Activated naive CD4-positive, alpha-beta T cell treated with anti-CD3 and anti-CD28 coated beads, Interleukin-2, amount 10 ng/mL, durations not matched to agents 7 days and 5 days (primary cell): ENCODE measurements at regions of chr9 and their contacts with region 1.

Region 1: GRCh38 chr9:34072868-34073590 is 24.3 kb upstream of the UBAP2 start:
- DNase-seq: no peak
- H3K4me3 Mint-ChIP-seq: no peak overlapping the region
- H3K27ac Mint-ChIP-seq: no peak overlapping the region
- H3K4me1 Mint-ChIP-seq: peaks cover 10% of the 10 kb centered on the region
- H3K27me3 Mint-ChIP-seq: no peaks in the 10 kb centered on the region

Region 2: DNA sequence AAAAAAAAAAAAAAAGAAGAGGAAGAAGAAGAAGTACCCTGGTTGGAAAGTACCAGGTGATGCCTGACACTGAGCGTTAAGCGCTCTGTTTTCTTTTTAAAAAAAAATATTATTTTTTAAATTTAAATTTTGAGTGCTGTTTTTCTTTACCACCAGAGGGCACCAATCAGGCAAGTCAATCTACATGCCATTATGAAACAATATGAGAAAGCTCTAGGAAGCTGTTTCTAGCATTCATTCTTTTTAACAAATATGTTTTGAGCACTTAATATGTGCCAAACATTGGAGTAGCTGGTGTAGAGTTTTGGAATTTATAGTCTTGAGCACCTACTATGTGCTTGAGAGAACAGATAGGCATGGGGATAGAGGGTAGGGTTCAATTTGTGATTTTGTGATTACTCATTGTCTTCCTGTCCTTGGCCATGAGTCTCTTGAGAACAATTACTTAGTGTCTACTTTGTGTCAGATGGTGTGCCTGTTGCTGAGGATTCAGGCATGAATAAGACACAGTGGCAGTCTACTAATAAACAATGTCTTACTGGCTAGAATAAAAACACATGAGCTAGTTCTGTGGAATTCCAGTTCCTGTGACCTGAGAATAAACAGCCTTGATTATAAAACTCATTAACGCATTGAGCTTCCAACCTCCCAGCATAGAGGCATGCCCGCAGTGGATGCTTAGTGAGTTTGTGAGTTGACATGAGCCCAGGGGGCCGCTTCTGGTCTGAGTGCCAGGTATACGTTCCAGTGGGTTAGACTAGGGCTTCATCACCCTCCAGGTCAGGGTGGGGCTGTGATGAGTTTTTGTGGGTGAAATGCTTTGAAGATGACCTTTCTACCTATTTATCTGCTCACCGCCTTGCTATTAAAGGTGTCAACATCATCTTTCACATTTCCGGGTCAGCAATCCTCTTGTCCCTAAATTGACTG is 259.1 kb before region 1 on chr9:
- CTCF ChIA-PET with region 1: interaction called, 14 read pairs
- DNase-seq: no peak
- H3K4me3 Mint-ChIP-seq: no peak overlapping the region
- H3K27ac Mint-ChIP-seq: peak overlapping the region; percentile 47
- H3K4me1 Mint-ChIP-seq: peaks cover 43% of the 10 kb centered on the region
- H3K27me3 Mint-ChIP-seq: peaks cover 15% of the 10 kb centered on the region

Region 3: DNA sequence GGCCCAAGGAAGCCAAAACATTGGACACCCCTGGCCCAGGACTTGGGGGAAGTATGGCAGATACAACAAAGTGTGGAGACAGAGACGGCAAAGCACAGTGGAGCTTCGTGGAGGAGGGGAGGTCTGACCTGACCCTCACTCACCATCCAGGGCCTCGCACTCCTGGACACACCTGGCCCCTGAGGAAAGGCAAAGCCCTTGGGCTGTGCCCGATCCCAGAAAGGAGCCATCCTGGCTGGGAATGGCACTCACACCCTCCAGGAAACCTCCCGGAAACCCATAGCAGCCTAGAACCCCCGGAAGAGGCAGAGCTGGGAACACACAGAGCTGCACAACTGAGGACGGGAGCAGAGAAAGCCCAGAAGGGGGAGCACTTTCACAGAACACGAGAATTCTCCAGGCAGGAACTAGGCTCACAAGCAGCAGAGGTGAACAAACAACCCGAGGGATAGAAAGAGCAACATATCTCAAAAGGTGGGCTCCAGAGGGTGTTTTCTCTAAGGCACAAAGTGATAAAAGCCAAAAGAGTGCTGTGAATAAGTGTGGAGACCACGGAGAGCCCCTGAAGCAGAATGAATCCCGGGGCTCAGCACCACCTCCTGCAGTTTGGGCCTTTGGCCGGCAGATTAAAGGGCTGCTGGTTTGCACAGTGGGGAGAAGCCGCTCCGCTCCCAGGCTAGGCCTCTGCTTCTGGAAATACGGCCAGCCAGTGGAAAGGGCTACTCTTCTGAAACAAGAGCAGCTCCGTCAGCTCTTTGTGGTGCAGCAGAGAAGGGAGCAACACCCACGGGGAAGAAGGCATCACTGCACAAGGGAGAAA is 147.8 kb before region 1 on chr9:
- CTCF ChIA-PET with region 1: interaction called, 35 read pairs
- DNase-seq: peak; percentile 46
- H3K4me3 Mint-ChIP-seq: no peak overlapping the region
- H3K27ac Mint-ChIP-seq: peak overlapping the region; percentile 37
- H3K4me1 Mint-ChIP-seq: no peaks in the 10 kb centered on the region
- H3K27me3 Mint-ChIP-seq: no peaks in the 10 kb centered on the region

Region 4: GRCh38 chr9:34010979-34011378 is 62.0 kb before region 1 on chr9:
- CTCF ChIA-PET with region 1: interaction called, 22 read pairs
- DNase-seq: no peak
- H3K4me3 Mint-ChIP-seq: no peak overlapping the region
- H3K27ac Mint-ChIP-seq: no peak overlapping the region
- H3K4me1 Mint-ChIP-seq: no peaks in the 10 kb centered on the region
- H3K27me3 Mint-ChIP-seq: no peaks in the 10 kb centered on the region

Region 5: DNA sequence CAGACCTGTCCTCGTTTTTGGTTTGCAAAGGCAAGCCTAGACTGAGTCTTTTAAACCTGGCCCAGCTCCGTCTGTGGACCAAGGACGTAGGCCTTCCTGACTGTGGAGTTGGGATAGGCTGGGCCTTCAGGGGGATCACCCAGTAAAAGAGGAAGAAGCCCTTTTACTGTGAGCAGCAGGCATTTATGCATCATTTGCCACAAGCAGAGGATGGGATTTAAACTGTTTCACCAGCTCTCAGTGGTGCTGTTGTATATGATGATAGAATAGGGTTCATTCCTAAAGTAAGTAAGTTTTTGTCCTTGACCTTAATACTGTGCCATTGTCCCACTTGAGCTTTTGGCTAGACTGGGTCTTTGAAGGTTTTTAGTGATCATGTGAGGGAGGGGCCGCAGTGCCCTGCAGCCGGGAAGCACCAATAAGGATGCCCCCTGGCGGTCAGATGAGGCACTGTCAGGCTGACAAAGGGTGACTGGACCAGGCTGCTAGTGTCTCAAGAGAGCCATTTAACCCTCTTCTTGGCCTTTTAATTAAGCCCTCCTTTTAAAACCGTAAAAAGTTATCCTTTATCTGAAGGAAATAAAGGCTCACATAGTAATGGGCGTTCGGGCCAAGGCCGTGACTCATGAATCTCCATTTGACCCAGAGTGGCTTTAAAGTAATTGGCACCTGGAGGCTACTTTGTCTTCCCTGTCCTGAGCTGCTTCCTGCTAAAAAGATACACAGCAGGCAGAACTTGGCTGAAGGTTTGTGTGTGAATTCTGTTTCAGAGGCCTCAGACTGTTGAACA is 179.8 kb after region 1 on chr9:
- CTCF ChIA-PET with region 1: interaction called, 21 read pairs
- DNase-seq: peak; percentile 76
- H3K4me3 Mint-ChIP-seq: no peak overlapping the region
- H3K27ac Mint-ChIP-seq: peak overlapping the region; percentile 42
- H3K4me1 Mint-ChIP-seq: peaks cover 18% of the 10 kb centered on the region
- H3K27me3 Mint-ChIP-seq: no peaks in the 10 kb centered on the region